GM13976 (cell line): ENCODE measurements at regions of chr12 and their contacts with region 1.

Region 1: GRCh38 chr12:7995266-7995963 is 37.1 kb upstream of the FOXJ2 start:
- DNase-seq: peak; percentile 72
- CTCF ChIP-seq: peak; percentile 72

Region 2: DNA sequence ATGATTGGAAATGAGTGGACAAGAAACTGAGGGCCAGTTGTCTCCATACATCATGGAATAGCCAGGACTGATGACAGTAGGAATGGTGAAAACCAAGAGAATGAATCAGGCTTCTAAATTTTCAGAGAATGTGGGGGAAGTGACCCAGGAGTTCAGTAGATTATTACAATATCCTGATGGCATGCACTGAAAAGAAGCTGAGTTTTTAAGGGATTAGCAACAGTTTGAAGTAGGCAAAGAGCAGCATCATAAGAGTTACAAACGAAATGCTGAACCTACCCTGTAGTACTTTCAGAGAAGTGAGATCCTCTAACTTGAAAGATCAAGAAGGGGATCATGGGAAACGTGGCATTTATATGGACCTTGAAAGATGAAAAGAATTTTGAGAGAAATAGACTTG is 135.9 kb before region 1 on chr12:
- in situ Hi-C with region 1: loop called (anchors 10 kb)
- DNase-seq: no peak
- CTCF ChIP-seq: no peak

Region 3: GRCh38 chr12:7935590-7936581 is 59.5 kb before region 1 on chr12 and contains the start of gene SLC2A3:
- in situ Hi-C with region 1: loop called (anchors 5 kb)
- DNase-seq: peak; percentile 83
- CTCF ChIP-seq: no peak

Region 4: DNA sequence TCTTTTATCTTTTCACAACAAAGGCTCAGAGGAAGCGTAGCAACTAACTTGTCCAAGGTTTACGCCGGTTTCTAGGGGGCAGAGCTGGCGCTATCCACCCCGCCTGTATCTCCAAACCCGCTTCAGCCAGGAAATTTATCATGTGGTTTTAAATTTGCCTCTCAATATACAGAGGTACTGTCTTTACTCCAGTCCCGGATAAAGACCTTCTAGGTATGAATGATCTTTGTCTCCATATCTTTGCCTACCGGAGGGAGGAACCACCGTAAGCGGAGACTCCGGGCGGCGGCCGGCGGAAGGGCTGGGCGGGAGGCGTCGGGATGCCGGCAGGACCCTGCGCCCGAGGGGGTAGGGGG is 701.7 kb after region 1 on chr12:
- in situ Hi-C with region 1: no loop called
- DNase-seq: no peak
- CTCF ChIP-seq: no peak